HCT116 (cell line): ENCODE measurements at regions of chr1 and their contacts with region 1.

Region 1: DNA sequence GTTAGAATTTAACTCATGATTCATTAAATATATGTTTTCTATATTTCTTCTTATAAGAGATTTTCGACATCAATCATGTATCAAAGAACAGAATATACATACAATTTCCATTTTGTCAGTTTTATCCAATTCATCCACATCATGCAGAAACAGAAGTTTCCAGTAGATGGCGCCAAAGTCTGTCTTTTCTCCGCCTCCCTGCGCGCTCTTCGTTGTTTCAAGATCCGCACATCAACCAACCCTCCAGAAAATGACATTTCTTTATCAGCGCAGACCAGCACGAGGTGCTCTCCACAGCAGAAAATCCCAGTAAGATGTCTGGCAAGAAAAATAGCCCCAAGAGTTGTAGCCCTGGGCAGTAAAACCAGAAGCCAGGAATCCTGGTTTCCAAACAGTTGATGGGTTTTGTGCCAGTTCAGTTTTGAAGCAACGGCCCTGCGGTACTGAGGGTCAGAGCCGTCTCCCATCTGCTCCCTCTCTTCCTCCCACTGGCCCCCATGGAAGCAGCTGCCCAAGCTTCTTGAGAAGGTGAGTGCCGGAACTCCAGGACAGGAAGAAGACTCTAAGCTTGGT is 38.6 kb upstream of the GPR137B start:
- DNase-seq: no peak
- ATAC-seq: peak; percentile 58
- H3K4me3 ChIP-seq: no peak overlapping the region
- H3K27ac ChIP-seq: no peak overlapping the region
- H3K4me1 ChIP-seq: peaks cover 3 to 21% of the 10 kb centered on the region in 2 experiments; a peak in 3 of 4 replicates
- H3K27me3 ChIP-seq: no peaks in the 10 kb centered on the region
- CTCF ChIP-seq: peak; percentile 63 to 84 (median 79)
- POLR2A ChIP-seq: no peak
- RAD21 ChIP-seq: peak; percentile 94

Region 2: GRCh38 chr1:235532360-235532759 is 571.4 kb before region 1 on chr1:
- CTCF ChIA-PET with region 1: no interaction called
- POLR2A ChIA-PET with region 1: no interaction called
- RAD21 ChIA-PET with region 1: no interaction called
- intact Hi-C with region 1: no loop called
- DNase-seq: peak; percentile 34
- ATAC-seq: peak; percentile 58; the same call in 1 of the 2 replicates
- H3K4me3 ChIP-seq: no peak overlapping the region
- H3K27ac ChIP-seq: no peak overlapping the region
- H3K4me1 ChIP-seq: peaks cover 5 to 23% of the 10 kb centered on the region in 2 experiments; a peak in 3 of 4 replicates
- H3K27me3 ChIP-seq: no peaks in the 10 kb centered on the region
- CTCF ChIP-seq: no peak
- POLR2A ChIP-seq: no peak
- RAD21 ChIP-seq: no peak

Region 3: DNA sequence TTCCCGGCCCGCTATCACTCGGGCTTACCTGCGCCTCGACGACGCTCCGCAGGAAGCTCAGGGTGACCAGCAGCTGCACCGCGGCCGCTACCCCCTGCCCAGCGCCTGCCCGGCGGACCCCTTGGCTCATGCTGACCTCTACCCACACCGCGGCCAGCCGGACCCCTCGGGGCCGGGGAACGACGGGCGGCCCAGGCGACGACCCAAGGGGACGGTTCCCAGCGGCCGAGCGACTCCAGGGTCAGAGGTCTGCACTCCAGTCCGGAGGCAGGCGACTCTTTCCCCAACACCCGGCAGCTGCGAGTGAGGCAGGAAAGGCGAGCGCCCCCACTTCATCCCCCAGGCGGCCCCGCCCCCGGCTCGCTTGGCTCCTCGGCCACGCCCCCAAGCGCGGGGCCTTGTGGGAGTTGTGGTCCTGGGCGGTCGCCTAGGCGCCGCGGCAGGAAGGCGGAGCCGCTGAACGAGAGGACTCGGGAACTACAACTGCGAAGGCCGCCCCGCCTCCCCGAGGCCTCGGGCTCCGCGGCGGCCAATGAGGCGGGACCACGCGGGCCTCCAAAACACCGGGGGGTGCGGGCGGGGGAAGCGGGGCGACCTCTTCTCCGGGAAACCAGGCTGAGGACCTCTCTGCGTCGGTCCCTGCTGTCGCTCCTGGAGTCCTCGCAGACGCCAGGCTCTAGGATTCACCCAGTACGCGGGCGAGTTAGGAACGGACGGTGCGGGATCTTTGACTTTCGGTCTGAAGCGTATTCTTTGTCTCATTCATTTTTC is 178.1 kb after region 1 on chr1 and contains the start of gene ERO1B:
- CTCF ChIA-PET with region 1: no interaction called
- POLR2A ChIA-PET with region 1: no interaction called
- RAD21 ChIA-PET with region 1: no interaction called
- intact Hi-C with region 1: loop called (anchors 5 kb)
- DNase-seq: peak; percentile 88
- ATAC-seq: peak; percentile 96
- H3K4me3 ChIP-seq: peak within 1 kb of the TSS; percentile 71 to 76
- H3K27ac ChIP-seq: peak within 1 kb of the TSS; percentile 55; the same call in 1 of the 2 replicates
- H3K4me1 ChIP-seq: peaks cover 3 to 15% of the 10 kb centered on the region in 2 experiments; a peak in 2 of 4 replicates
- H3K27me3 ChIP-seq: no peaks in the 10 kb centered on the region
- CTCF ChIP-seq: no peak
- POLR2A ChIP-seq: peak; percentile 40
- RAD21 ChIP-seq: no peak
- total RNA-seq, gene ERO1B: 5.4 TPM

Region 4: DNA sequence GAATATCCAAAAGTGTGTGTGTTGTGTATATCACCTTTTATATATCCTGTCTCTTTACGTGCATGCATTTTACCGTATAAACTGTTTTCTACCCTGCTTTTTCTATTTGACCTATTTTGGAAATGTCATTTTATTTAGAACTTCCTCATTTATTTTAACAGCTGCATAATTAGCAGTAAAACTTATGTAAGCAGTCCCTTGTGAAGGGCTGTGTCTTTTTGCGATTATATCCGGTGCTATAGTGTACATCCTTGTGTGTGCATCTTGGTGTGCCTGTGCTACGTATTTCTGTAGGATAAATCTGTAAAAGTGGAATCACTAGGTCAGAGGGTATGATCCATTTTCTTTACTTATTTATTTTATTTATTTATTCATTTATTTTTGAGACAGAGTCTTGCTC is 427.2 kb after region 1 on chr1:
- CTCF ChIA-PET with region 1: interaction called, 4 read pairs
- POLR2A ChIA-PET with region 1: interaction called, 3 read pairs
- RAD21 ChIA-PET with region 1: interaction called in 1 of 2 experiments, 4 read pairs
- intact Hi-C with region 1: loop called (anchors 1 kb)
- DNase-seq: no peak
- ATAC-seq: no peak
- H3K4me3 ChIP-seq: no peak overlapping the region
- H3K27ac ChIP-seq: no peak overlapping the region
- H3K4me1 ChIP-seq: peaks cover 11 to 15% of the 10 kb centered on the region in 2 experiments
- H3K27me3 ChIP-seq: no peaks in the 10 kb centered on the region
- CTCF ChIP-seq: no peak
- POLR2A ChIP-seq: no peak
- RAD21 ChIP-seq: no peak

Region 5: DNA sequence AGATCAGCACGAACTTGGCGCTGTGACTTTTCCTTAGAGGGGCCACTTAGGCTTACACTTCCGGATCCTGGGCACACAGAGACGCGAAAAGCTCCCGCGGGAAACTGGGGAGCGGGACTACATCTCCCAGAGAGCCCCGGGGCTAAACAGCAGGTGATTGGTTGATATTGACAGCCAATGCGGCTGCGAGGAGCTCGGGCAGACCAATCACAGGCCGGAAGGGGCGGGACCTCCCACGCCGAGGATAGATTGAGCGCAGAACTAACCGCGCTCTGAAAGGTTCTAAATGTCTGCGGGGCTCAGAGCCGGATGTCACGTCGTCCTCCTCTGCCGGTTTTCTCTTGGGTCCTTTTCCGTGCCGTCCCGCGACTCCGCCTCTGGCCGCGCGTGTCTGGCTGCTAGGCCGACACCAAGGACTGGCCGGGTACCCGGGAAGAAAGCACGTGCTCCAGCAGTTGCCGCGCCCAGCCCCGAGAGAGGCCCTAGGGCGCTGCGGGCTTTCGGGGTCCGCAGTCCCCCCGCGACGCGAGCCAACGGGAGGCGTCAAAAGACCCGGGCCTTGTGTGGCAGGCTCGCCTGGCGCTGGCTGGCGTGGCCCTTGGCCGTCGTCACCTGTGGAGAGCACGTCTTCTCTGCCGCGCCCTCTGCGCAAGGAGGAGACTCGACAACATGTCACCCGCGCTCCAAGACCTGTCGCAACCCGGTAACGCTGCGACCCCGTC is 691.5 kb after region 1 on chr1 and contains the start of gene MTR:
- CTCF ChIA-PET with region 1: no interaction called
- POLR2A ChIA-PET with region 1: no interaction called
- RAD21 ChIA-PET with region 1: no interaction called
- intact Hi-C with region 1: loop called (anchors 5 kb)
- DNase-seq: peak; percentile 97
- ATAC-seq: peak; percentile 98
- H3K4me3 ChIP-seq: peak within 1 kb of the TSS; percentile 86 to 88
- H3K27ac ChIP-seq: peak within 1 kb of the TSS; percentile 88
- H3K4me1 ChIP-seq: peaks cover 6 to 13% of the 10 kb centered on the region in 2 experiments
- H3K27me3 ChIP-seq: no peaks in the 10 kb centered on the region
- CTCF ChIP-seq: no peak
- POLR2A ChIP-seq: peak; percentile 92
- RAD21 ChIP-seq: no peak
- total RNA-seq, gene MTR: 24.6 TPM

Region 6: DNA sequence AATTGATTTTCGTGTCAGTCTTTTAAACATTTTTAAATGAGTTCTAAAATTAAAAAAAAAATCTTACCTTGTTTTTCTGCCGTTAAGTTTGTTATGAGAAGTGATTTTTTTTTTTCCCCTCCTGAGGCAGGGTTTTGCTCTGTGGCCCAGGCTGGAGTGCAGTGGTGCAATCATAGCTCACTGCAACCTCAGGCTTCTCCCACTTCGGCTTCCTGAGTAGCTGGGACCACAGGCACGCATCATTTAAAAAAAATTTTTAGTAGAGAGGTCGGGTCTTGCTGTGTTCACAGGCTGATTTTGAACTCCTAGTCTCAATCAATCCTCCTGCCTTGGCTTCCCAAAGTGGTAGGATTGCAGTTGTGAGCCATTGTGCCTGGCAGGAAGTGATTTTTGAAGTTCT is 732.4 kb after region 1 on chr1:
- CTCF ChIA-PET with region 1: no interaction called
- POLR2A ChIA-PET with region 1: no interaction called
- RAD21 ChIA-PET with region 1: no interaction called
- intact Hi-C with region 1: no loop called
- DNase-seq: no peak
- ATAC-seq: no peak
- H3K4me3 ChIP-seq: no peak overlapping the region
- H3K27ac ChIP-seq: no peak overlapping the region
- H3K4me1 ChIP-seq: no peaks in the 10 kb centered on the region
- H3K27me3 ChIP-seq: no peaks in the 10 kb centered on the region
- CTCF ChIP-seq: no peak
- POLR2A ChIP-seq: no peak
- RAD21 ChIP-seq: no peak

Region 7: DNA sequence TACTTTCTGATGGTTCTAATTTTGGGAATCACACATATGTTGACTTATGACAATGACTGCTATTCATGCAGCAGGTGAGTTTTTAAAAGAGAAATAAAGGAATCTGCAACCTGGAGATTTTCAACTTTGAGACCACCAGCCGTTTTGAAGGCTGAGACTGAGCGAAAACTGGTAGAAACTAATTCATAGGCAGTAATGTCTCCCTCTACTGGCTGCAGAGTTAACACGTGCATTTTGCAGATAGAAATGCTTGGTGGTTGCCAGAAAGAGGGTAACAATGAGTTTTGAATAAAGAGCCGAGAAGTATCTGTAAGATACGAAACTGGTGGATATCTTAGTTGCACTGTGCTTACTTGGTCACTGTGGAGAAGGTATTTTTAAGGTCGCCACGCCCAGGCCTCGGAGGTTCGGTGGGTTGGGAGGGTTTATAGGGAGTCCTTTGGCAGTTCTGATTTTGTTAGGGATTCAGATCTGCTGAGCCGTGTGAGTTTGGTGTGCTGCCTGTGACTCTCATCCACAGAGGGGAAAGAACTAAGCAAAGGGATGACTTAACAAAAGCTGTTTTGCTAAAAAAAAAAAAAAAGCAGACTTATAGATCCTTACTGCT is 1021.2 kb after region 1 on chr1:
- CTCF ChIA-PET with region 1: no interaction called
- POLR2A ChIA-PET with region 1: no interaction called
- RAD21 ChIA-PET with region 1: no interaction called
- intact Hi-C with region 1: loop called (anchors 10 kb)
- DNase-seq: peak; percentile 8
- ATAC-seq: peak; percentile 53
- H3K4me3 ChIP-seq: no peak overlapping the region
- H3K27ac ChIP-seq: no peak overlapping the region
- H3K4me1 ChIP-seq: no peaks in the 10 kb centered on the region
- H3K27me3 ChIP-seq: no peaks in the 10 kb centered on the region
- CTCF ChIP-seq: peak; percentile 35 to 80 (median 67); a peak in 5 of 6 replicates
- POLR2A ChIP-seq: no peak
- RAD21 ChIP-seq: peak; percentile 39

Region 8: DNA sequence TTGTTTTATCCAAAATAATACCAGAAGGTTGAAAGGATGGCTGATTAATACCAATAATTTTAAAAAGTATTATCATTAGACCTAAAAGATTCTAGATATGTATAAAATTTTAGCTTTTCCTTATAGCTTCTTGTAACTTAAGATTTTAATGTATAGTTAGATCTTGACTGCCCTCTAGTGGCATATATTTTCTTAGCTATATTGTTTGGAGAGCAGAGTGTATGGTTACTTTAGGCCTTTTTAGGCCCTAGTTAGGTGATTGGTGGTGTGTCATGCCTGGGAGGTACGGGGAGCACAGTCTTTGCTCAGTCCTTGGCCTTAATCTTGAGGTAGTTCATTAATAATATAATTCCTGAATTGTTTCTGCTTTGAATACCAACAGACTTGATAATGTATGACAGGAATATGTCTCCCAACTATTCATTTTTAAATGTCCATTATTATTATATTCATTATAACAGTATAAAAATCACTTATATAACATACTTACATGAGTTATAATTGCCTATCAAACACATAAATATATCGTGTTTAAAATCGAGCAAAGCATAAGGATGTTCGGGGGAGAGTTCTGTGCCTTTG is 1458.6 kb after region 1 on chr1:
- CTCF ChIA-PET with region 1: interaction called, 6 read pairs
- POLR2A ChIA-PET with region 1: no interaction called
- RAD21 ChIA-PET with region 1: no interaction called
- intact Hi-C with region 1: loop called (anchors 5 kb)
- DNase-seq: no peak
- ATAC-seq: peak; percentile 67
- H3K4me3 ChIP-seq: no peak overlapping the region
- H3K27ac ChIP-seq: no peak overlapping the region
- H3K4me1 ChIP-seq: no peaks in the 10 kb centered on the region
- H3K27me3 ChIP-seq: no peaks in the 10 kb centered on the region
- CTCF ChIP-seq: peak; percentile 23 to 62 (median 39); a peak in 5 of 6 replicates
- POLR2A ChIP-seq: no peak
- RAD21 ChIP-seq: peak; percentile 47